B cell (primary cell): ENCODE measurements at regions of chr19 and their contacts with region 1.

Region 1: GRCh38 chr19:16417660-16418596 is 53.8 kb downstream of the EPS15L1 start:
- DNase-seq: peak; percentile 92
- ATAC-seq: peak; percentile 80
- H3K4me3 ChIP-seq: peak overlapping the region in 4 of 5 experiments; percentile 15 to 52 (median 35)
- H3K4me3 Mint-ChIP-seq: peak overlapping the region; percentile 65
- H3K27ac ChIP-seq: peak overlapping the region; percentile 90 to 97
- H3K27ac Mint-ChIP-seq: peak overlapping the region; percentile 96
- H3K4me1 ChIP-seq: peaks cover 31 to 43% of the 10 kb centered on the region in 2 donors
- H3K4me1 Mint-ChIP-seq: peaks cover 34% of the 10 kb centered on the region
- H3K27me3 ChIP-seq: no peaks in the 10 kb centered on the region
- H3K27me3 Mint-ChIP-seq: no peaks in the 10 kb centered on the region
- CTCF ChIP-seq: peak; percentile 97

Region 2: DNA sequence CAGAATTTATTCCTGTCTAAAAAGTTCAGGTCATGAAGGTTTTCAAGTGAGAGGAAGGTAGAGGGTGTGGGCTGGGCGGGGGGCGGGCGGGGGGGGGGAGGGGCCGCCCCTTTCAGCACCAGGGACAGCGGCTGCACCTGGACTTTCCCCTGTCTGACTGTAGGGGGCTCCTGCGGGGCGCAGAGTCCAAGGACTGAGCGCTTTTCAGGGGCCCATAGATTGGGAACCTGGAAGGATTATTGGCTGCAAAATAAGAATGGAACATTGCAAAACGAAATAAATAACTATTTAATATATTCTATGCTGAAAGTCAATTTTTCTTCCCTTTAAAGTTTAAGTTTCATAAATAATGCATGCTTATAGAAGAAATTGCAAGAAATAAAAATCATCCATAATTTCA is 786.1 kb before region 1 on chr19:
- CTCF ChIA-PET with region 1: interaction called, 3 read pairs
- POLR2A ChIA-PET with region 1: no interaction called
- intact Hi-C with region 1: loop called (anchors 5 kb)
- DNase-seq: peak; percentile 19
- ATAC-seq: no peak
- H3K4me3 ChIP-seq: no peak overlapping the region
- H3K4me3 Mint-ChIP-seq: no peak overlapping the region
- H3K27ac ChIP-seq: no peak overlapping the region
- H3K27ac Mint-ChIP-seq: no peak overlapping the region
- H3K4me1 ChIP-seq: peaks cover 0 to 7% of the 10 kb centered on the region in 2 donors
- H3K4me1 Mint-ChIP-seq: peaks cover 3% of the 10 kb centered on the region
- H3K27me3 ChIP-seq: peaks cover 0 to 17% (median 6%) of the 10 kb centered on the region in 4 experiments
- H3K27me3 Mint-ChIP-seq: peaks cover 25% of the 10 kb centered on the region
- CTCF ChIP-seq: peak; percentile 36

Region 3: GRCh38 chr19:16185123-16185767 is 232.7 kb before region 1 on chr19 and contains the start of gene FAM32A:
- CTCF ChIA-PET with region 1: interaction called, 23 read pairs
- POLR2A ChIA-PET with region 1: interaction called, 5 read pairs
- intact Hi-C with region 1: loop called (anchors 1 kb)
- DNase-seq: peak; percentile 99
- ATAC-seq: peak; percentile 88
- H3K4me3 ChIP-seq: peak within 1 kb of the TSS; percentile 65 to 99 (median 71)
- H3K4me3 Mint-ChIP-seq: peak within 1 kb of the TSS; percentile 97
- H3K27ac ChIP-seq: peak within 1 kb of the TSS; percentile 60 to 83
- H3K27ac Mint-ChIP-seq: peak within 1 kb of the TSS; percentile 96
- H3K4me1 ChIP-seq: peaks cover 14 to 37% of the 10 kb centered on the region in 2 donors
- H3K4me1 Mint-ChIP-seq: peaks cover 33% of the 10 kb centered on the region
- H3K27me3 ChIP-seq: no peaks in the 10 kb centered on the region
- H3K27me3 Mint-ChIP-seq: no peaks in the 10 kb centered on the region
- CTCF ChIP-seq: no peak
- total RNA-seq, gene FAM32A: 53.4 TPM in 2 replicates

Region 4: DNA sequence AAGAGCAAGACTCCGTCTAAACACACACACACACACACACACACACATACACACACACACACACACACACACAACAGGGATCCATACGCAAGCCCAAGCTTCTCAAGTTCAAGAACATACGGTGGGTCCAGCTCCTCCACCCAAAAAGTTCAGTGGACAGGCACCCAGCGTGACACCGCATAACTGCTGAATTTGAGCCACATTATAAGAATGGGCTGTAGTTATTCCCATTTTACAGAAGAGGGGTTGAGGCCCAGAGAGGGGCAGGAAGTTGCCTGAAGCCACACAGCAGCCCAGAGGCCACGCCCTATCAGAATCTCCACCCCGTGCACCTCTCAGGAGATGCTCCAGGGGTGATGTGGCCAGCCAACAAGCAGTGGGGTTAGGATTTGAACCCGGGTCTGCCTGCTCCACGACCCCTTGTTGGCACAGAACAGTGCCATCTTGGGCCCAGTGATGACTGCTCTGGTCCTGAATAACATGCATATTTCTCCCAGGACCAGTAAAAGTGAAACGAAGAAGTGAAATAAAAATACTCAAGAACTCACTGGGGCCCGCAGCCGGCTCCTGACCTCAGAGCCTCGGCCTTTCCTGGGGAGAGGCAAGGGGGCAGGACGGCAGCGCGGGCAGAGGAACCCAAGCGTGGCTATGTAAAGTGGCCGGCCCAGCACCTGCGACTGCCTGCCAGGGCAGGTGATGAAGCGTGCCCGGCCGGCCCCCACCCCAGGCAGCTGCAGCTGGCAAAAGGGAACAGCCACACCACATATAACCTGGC is 158.4 kb before region 1 on chr19:
- CTCF ChIA-PET with region 1: interaction called, 13 read pairs
- POLR2A ChIA-PET with region 1: interaction called, 6 read pairs
- intact Hi-C with region 1: no loop called
- DNase-seq: peak; percentile 94
- ATAC-seq: peak; percentile 79
- H3K4me3 ChIP-seq: peak overlapping the region in 1 of 5 experiments; percentile 42
- H3K4me3 Mint-ChIP-seq: peak overlapping the region; percentile 78
- H3K27ac ChIP-seq: peak overlapping the region; percentile 87 to 89
- H3K27ac Mint-ChIP-seq: peak overlapping the region; percentile 95
- H3K4me1 ChIP-seq: peaks cover 75 to 94% of the 10 kb centered on the region in 2 donors
- H3K4me1 Mint-ChIP-seq: peaks cover 83% of the 10 kb centered on the region
- H3K27me3 ChIP-seq: no peaks in the 10 kb centered on the region
- H3K27me3 Mint-ChIP-seq: no peaks in the 10 kb centered on the region
- CTCF ChIP-seq: no peak

Region 5: DNA sequence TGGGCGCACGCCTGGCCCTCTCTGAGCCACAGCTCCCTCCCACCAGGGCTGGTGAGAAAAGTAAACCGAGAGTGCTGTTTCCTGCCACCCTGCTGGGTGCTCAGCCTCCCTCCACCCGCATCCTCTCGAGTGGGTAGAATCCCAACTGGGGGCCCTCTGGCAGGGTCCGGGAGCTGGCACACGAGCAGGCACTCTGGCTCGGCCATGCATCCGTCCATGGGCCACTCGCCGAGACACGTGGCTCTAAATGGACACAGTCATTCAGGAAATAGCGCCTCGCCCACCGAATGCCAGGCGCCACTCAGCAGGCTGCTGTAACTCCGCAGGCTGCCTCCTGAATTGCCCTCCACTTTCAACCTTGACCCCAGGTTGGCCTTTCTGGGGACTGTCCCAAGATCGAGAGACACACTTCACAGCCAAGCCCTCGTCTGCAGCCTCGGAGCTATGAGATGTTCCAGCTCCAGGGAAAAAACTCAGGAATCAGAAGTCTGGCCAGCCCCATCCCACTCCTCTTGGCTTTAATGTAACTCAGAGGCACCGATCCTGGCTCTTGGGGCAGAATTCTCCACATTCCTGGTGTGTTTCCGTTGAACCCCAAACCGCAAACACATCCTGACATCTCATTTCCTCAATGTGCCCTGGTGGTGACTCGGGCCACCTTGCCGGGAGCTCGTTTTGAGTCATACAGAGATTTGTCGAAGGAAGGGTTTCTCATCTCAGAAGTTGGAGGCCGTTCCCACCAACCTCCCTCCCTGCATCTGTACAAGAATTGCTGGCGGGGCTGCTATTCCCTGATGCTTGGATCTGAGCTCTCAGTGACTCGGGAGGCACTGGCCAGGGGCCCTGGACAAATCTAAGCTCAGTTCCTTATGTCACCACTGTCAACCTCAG is 79.2 kb before region 1 on chr19:
- CTCF ChIA-PET with region 1: interaction called, 8 read pairs
- POLR2A ChIA-PET with region 1: interaction called, 6 read pairs
- intact Hi-C with region 1: loop called (anchors 1 kb)
- DNase-seq: peak; percentile 64
- ATAC-seq: no peak
- H3K4me3 ChIP-seq: peak overlapping the region in 4 of 5 experiments; percentile 10 to 49 (median 29)
- H3K4me3 Mint-ChIP-seq: peak overlapping the region; percentile 83
- H3K27ac ChIP-seq: peak overlapping the region; percentile 27 to 39
- H3K27ac Mint-ChIP-seq: peak overlapping the region; percentile 87
- H3K4me1 ChIP-seq: peaks cover 53 to 71% of the 10 kb centered on the region in 2 donors
- H3K4me1 Mint-ChIP-seq: peaks cover 61% of the 10 kb centered on the region
- H3K27me3 ChIP-seq: no peaks in the 10 kb centered on the region
- H3K27me3 Mint-ChIP-seq: no peaks in the 10 kb centered on the region
- CTCF ChIP-seq: peak; percentile 14

Region 6: GRCh38 chr19:16400911-16401591 is 16.9 kb before region 1 on chr19:
- CTCF ChIA-PET with region 1: interaction called, 22 read pairs
- POLR2A ChIA-PET with region 1: interaction called, 7 read pairs
- intact Hi-C with region 1: loop called (anchors 2 kb)
- DNase-seq: no peak
- ATAC-seq: no peak
- H3K4me3 ChIP-seq: no peak overlapping the region
- H3K4me3 Mint-ChIP-seq: no peak overlapping the region
- H3K27ac ChIP-seq: peak overlapping the region in 1 of 2 donors; percentile 27
- H3K27ac Mint-ChIP-seq: peak overlapping the region; percentile 64
- H3K4me1 ChIP-seq: peaks cover 44 to 58% of the 10 kb centered on the region in 2 donors
- H3K4me1 Mint-ChIP-seq: peaks cover 56% of the 10 kb centered on the region
- H3K27me3 ChIP-seq: no peaks in the 10 kb centered on the region
- H3K27me3 Mint-ChIP-seq: no peaks in the 10 kb centered on the region
- CTCF ChIP-seq: no peak